Right ventricle myocardium inferior (tissue), 1 donor: ENCODE measurements at regions of chr1 and their contacts with region 1.

Region 1: DNA sequence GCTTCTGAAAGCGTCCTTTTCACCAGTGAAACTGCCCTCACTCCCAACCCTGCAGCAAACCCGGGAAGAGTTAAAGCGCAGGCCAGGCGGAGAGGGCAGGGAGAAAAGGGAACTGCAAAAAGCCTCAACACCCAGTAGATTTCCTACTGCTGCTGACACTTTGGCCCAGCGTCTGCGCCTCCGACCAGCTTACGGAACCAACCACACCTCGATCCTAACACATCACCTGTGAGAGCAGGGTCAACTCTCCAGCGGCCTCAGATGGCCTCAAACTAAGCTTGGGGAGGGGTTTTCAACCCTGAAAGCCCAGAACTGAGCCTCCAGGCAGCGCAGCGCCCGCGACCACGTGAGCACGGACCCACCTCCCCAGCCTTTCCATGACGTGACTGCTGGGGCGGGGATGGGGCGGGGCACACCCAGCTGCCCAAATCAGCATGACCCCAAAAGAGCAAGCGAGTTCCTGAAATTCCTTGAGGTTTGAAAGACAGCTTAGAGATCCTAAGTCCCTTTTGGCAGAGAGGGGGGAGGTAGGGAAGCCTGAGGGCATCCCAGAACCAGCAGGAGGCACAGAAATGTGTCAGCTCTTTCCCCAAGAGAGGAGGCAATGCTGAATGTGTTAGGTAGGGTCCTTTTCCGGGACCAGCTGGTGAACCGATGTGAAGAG is 59.1 kb downstream of the ITPKB start:
- DNase-seq: peak; percentile 92
- ATAC-seq: peak; percentile 83

Region 2: DNA sequence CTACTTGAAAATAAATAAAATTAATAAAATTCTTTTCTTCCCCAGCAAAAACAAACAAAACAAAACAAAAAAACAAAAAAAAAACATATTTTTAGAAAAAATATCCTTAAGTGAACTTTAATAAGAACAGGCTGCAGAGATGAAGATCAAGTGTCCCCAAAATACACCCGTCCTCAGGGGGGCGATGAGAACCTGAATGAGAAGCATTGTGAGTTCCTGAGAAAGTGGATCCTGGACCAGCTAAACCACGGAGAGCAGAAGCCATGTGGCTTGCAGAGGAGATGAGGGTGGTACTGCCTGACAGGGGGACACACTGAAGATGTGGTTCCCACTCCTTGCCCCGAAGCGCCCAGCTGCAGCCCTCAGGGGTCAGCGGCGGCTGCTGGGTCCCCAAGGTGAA is 30.2 kb before region 1 on chr1:
- intact Hi-C with region 1: loop called (anchors 5 kb)
- DNase-seq: no peak
- ATAC-seq: no peak

Region 3: DNA sequence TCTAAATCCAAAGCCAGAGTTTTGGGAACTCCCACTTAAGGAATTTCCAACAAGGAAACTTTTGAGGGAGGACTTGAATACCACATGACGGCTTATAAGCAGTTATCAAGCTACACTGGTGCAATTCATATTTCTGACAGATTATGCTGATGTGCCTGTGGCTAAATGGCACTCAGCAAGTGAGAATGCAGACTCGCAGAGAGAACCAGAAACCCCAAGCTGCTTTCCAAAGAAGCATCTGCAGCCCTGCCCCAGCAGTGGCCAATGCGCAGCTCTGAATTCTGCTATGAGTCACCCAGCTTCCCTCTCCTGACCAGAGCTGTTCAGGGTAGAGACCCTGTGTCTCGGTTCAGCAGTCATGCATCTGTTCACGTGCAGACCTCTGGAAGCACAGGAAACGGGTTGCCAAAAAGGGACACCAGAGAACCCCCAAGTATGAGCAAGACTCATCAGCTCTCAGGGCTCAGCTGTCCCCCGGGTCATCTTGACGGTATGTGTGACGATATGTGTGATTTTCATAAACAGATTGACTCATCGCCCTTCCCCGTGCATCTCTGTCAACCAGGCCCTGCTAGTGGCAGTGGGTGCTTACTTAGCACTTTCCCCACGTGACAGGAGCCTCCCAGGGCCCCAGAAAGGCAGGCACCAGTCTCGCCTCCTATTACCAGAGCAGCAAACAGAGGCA is 17.2 kb before region 1 on chr1:
- intact Hi-C with region 1: loop called (anchors 2 kb)
- DNase-seq: peak; percentile 86
- ATAC-seq: peak; percentile 71

Region 4: GRCh38 chr1:226902601-226903000 is 222.6 kb after region 1 on chr1:
- intact Hi-C with region 1: no loop called
- DNase-seq: no peak
- ATAC-seq: no peak